Activated CD8-positive, alpha-beta T cell treated with anti-CD3 and anti-CD28 coated beads for 36 hours (primary cell): ENCODE measurements at regions of chr1 and their contacts with region 1.

Region 1: GRCh38 chr1:205711104-205712020 is 31.1 kb upstream of the SLC45A3 start:
- DNase-seq: peak; percentile 83
- ATAC-seq: peak; percentile 87
- H3K4me3 Mint-ChIP-seq: no peak overlapping the region
- H3K27ac Mint-ChIP-seq: peak overlapping the region; percentile 32
- H3K4me1 Mint-ChIP-seq: peaks cover 12% of the 10 kb centered on the region
- H3K27me3 Mint-ChIP-seq: no peaks in the 10 kb centered on the region
- CTCF ChIP-seq: peak; percentile 91

Region 2: DNA sequence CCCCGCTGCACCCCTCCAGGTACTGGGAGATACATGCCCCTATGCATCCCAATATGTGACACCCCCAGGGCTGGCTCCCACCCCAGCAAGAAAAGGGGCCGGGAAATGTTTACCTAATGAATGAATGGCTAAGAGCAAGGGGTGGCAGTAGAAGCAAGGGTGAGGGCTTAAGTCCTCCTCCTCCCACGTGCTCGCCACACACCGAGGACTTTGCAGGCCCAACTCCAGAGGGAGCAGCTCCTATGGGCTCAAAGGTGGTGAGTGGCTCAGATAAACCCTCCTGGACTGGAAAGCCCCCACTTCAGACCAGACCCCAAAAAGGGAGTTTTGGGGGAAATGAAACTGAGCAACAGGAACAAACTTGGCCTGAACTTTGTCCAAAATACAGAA is 42.4 kb before region 1 on chr1:
- CTCF ChIA-PET with region 1: interaction called, 16 read pairs
- POLR2A ChIA-PET with region 1: no interaction called
- intact Hi-C with region 1: no loop called
- DNase-seq: no peak
- ATAC-seq: peak; percentile 31
- H3K4me3 Mint-ChIP-seq: no peak overlapping the region
- H3K27ac Mint-ChIP-seq: no peak overlapping the region
- H3K4me1 Mint-ChIP-seq: peaks cover 7% of the 10 kb centered on the region
- H3K27me3 Mint-ChIP-seq: peaks cover 9% of the 10 kb centered on the region
- CTCF ChIP-seq: no peak

Region 3: GRCh38 chr1:205689479-205689878 is 21.9 kb before region 1 on chr1:
- CTCF ChIA-PET with region 1: interaction called, 17 read pairs
- POLR2A ChIA-PET with region 1: interaction called, 5 read pairs
- intact Hi-C with region 1: no loop called
- DNase-seq: no peak
- ATAC-seq: no peak
- H3K4me3 Mint-ChIP-seq: no peak overlapping the region
- H3K27ac Mint-ChIP-seq: no peak overlapping the region
- H3K4me1 Mint-ChIP-seq: no peaks in the 10 kb centered on the region
- H3K27me3 Mint-ChIP-seq: peaks cover 11% of the 10 kb centered on the region
- CTCF ChIP-seq: no peak

Region 4: DNA sequence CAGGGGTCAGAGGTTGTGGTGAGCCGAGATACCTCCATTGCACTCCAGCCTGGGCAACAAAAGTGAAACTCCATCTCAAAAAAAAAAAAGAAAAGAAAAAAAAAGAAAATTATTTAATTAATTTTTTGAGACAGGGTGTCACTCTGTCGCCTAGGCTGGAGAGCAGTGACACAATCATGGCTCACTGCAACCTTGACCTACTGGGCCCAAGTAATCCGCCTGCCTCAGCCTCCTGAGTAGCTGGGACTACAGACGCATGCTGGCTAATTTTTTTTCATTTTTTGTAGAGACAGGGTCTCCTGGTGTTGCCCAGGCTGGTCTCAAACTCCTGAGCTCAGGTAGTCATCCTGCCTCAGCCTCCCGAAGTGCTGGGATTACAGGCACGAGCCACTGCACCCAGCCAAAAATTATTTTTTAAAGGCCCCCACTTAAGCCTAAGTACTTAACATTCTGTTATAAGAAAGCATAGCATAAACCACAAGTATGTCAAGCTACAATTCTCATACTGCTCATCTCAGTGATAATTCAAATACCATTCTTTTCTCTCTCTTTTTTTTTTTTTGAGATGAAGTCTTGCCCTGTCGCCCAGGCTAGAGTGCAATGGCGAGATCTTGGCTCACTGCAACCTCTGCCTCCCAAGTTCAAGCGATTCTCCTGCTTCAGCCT is 18.7 kb after region 1 on chr1:
- CTCF ChIA-PET with region 1: interaction called, 64 read pairs
- POLR2A ChIA-PET with region 1: interaction called, 3 read pairs
- intact Hi-C with region 1: no loop called
- DNase-seq: no peak
- ATAC-seq: no peak
- H3K4me3 Mint-ChIP-seq: no peak overlapping the region
- H3K27ac Mint-ChIP-seq: no peak overlapping the region
- H3K4me1 Mint-ChIP-seq: peaks cover 42% of the 10 kb centered on the region
- H3K27me3 Mint-ChIP-seq: no peaks in the 10 kb centered on the region
- CTCF ChIP-seq: no peak

Region 5: GRCh38 chr1:205775015-205775716 is 63.8 kb after region 1 on chr1 and contains the start of gene RAB29:
- CTCF ChIA-PET with region 1: interaction called, 28 read pairs
- POLR2A ChIA-PET with region 1: no interaction called
- intact Hi-C with region 1: no loop called
- DNase-seq: peak; percentile 94
- ATAC-seq: peak; percentile 83
- H3K4me3 Mint-ChIP-seq: peak within 1 kb of the TSS; percentile 89
- H3K27ac Mint-ChIP-seq: peak within 1 kb of the TSS; percentile 92
- H3K4me1 Mint-ChIP-seq: peaks cover 53% of the 10 kb centered on the region
- H3K27me3 Mint-ChIP-seq: no peaks in the 10 kb centered on the region
- CTCF ChIP-seq: no peak
- total RNA-seq, gene RAB29: 20.1 to 22.5 TPM

Region 6: GRCh38 chr1:205812878-205813754 is 101.8 kb after region 1 on chr1 and contains the start of gene SLC41A1:
- CTCF ChIA-PET with region 1: interaction called, 10 read pairs
- POLR2A ChIA-PET with region 1: no interaction called
- intact Hi-C with region 1: no loop called
- DNase-seq: peak; percentile 96
- ATAC-seq: peak; percentile 96
- H3K4me3 Mint-ChIP-seq: peak within 1 kb of the TSS; percentile 97
- H3K27ac Mint-ChIP-seq: peak within 1 kb of the TSS; percentile 88
- H3K4me1 Mint-ChIP-seq: peaks cover 52% of the 10 kb centered on the region
- H3K27me3 Mint-ChIP-seq: no peaks in the 10 kb centered on the region
- CTCF ChIP-seq: no peak
- total RNA-seq, gene SLC41A1: 33.6 to 35.3 TPM

Region 7: GRCh38 chr1:205840146-205840923 is 129.0 kb after region 1 on chr1:
- CTCF ChIA-PET with region 1: no interaction called
- POLR2A ChIA-PET with region 1: no interaction called
- intact Hi-C with region 1: no loop called
- DNase-seq: no peak
- ATAC-seq: no peak
- H3K4me3 Mint-ChIP-seq: no peak overlapping the region
- H3K27ac Mint-ChIP-seq: no peak overlapping the region
- H3K4me1 Mint-ChIP-seq: peaks cover 2% of the 10 kb centered on the region
- H3K27me3 Mint-ChIP-seq: no peaks in the 10 kb centered on the region
- CTCF ChIP-seq: no peak

Region 8: DNA sequence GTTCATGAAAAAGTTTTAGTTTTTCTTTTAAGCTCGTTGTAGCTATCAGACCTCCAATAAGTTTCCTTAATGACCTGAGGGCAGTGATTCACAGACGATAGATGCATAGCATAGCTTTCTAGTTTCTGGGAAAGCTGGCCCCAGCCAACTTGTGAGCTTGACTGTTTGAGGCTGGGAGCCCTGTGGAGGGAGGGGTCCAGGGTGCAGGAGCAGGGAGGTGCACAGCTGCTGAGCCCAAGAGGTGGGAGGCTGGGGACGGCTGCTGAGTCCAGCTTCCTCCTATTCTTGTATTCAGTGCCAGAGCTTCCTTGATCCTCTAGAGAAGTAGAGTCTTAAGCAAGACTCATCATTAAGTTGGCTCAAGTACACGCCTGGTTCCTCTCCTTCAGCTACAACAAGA is 416.8 kb after region 1 on chr1:
- CTCF ChIA-PET with region 1: no interaction called
- POLR2A ChIA-PET with region 1: no interaction called
- intact Hi-C with region 1: no loop called
- DNase-seq: no peak
- ATAC-seq: no peak
- H3K4me3 Mint-ChIP-seq: no peak overlapping the region
- H3K27ac Mint-ChIP-seq: no peak overlapping the region
- H3K4me1 Mint-ChIP-seq: no peaks in the 10 kb centered on the region
- H3K27me3 Mint-ChIP-seq: peaks cover 23% of the 10 kb centered on the region
- CTCF ChIP-seq: no peak